Pancreas (tissue), 10 donors: ENCODE measurements at regions of chr10 and their contacts with region 1.

Region 1: GRCh38 chr10:77165445-77166208 is 472.0 kb downstream of the KCNMA1 start:
- DNase-seq: peak in 3 of 6 donors; percentile 23 to 60 (median 25)
- ATAC-seq: peak; percentile 75 to 91 (median 88)
- H3K4me3 ChIP-seq: peak overlapping the region in 2 of 4 donors; percentile 9 to 33
- H3K27ac ChIP-seq: peak overlapping the region in 2 of 4 donors; percentile 9 to 25
- H3K4me1 ChIP-seq: peaks cover 0 to 8% (median 0%) of the 10 kb centered on the region in 3 donors
- H3K27me3 ChIP-seq: no peaks in the 10 kb centered on the region
- CTCF ChIP-seq: peak; percentile 47 to 64 (median 61)

Region 2: GRCh38 chr10:77251297-77252013 is 85.8 kb after region 1 on chr10:
- intact Hi-C with region 1: no loop called
- DNase-seq: peak in 2 of 6 donors; percentile 31 to 33
- ATAC-seq: peak; percentile 55 to 82 (median 79)
- H3K4me3 ChIP-seq: no peak overlapping the region
- H3K27ac ChIP-seq: no peak overlapping the region
- H3K4me1 ChIP-seq: peaks cover 0 to 15% (median 5%) of the 10 kb centered on the region in 3 donors
- H3K27me3 ChIP-seq: no peaks in the 10 kb centered on the region
- CTCF ChIP-seq: peak; percentile 19 to 41 (median 27)

Region 3: DNA sequence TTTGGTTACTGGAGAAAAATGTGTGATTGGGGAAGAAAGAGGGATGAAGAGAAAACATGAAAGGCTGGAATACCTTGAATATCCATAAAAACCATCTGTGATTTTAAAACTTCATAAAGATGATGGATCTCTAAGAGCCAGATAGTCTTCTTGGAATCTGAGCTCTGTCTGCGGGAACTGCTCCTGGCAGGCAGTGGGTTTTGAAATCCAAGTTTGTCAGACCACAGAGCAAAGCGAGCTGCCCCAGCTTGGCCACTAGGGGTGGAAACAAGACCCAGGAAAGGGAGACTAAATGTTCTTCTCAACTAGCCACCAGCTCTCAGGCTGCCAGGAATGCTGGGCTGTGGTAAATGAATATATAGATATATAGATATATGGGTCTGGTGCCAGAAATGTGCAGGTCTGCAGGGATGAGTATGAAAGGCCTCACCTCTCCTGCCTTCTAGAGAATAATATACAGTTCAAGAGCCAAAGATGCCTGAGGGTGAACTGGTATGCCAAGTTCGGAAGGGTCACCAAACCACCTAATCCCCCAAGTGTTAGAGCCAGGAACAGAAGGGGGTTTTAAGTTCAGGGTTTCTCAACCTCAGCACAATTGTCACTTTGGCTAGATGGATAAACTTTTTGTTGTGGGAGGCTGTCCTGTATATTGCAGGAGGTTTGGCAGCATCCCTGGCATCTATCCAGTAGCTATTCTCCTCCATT is 263.2 kb after region 1 on chr10:
- intact Hi-C with region 1: no loop called
- DNase-seq: peak in 4 of 6 donors; percentile 65 to 75 (median 68)
- ATAC-seq: peak; percentile 74 to 89 (median 84)
- H3K4me3 ChIP-seq: no peak overlapping the region
- H3K27ac ChIP-seq: no peak overlapping the region
- H3K4me1 ChIP-seq: peaks cover 7 to 24% (median 11%) of the 10 kb centered on the region in 3 donors
- H3K27me3 ChIP-seq: no peaks in the 10 kb centered on the region
- CTCF ChIP-seq: peak; percentile 23 to 71 (median 64)

Region 4: GRCh38 chr10:77649333-77650331 is 484.0 kb after region 1 on chr10:
- intact Hi-C with region 1: loop called (anchors 5 to 10 kb)
- DNase-seq: no peak
- ATAC-seq: no peak
- H3K4me3 ChIP-seq: no peak overlapping the region
- H3K27ac ChIP-seq: no peak overlapping the region
- H3K4me1 ChIP-seq: no peaks in the 10 kb centered on the region
- H3K27me3 ChIP-seq: no peaks in the 10 kb centered on the region
- CTCF ChIP-seq: no peak